ENCODE measurements at regions of chr19 and their contacts with region 1.

Region 1: GRCh38 chr19:10580979-10581631 is 6.0 kb downstream of the AP1M2 start:
- DNase-seq: peak; percentile 86
- H3K4me3 ChIP-seq: peak overlapping the region in 1 of 2 experiments; percentile 6; a peak in 1 of 4 replicates
- H3K27ac ChIP-seq: no peak overlapping the region
- H3K4me1 ChIP-seq: peaks cover 0 to 3% of the 10 kb centered on the region in 2 experiments; a peak in 1 of 4 replicates
- H3K27me3 ChIP-seq: no peaks in the 10 kb centered on the region
- CTCF ChIP-seq: peak; percentile 97
- EP300 ChIP-seq: no peak
- RAD21 ChIP-seq: peak; percentile 98

Region 2: GRCh38 chr19:10565567-10566407 is 15.3 kb before region 1 on chr19 and contains the start of gene KRI1:
- CTCF ChIA-PET with region 1: interaction called, 42 read pairs
- POLR2A ChIA-PET with region 1: no interaction called
- DNase-seq: peak; percentile 99
- H3K4me3 ChIP-seq: peak within 1 kb of the TSS; percentile 77 to 89
- H3K27ac ChIP-seq: peak within 1 kb of the TSS; percentile 64 to 77; a peak in 3 of 4 replicates
- H3K4me1 ChIP-seq: peaks cover 8 to 30% of the 10 kb centered on the region in 2 experiments; a peak in 3 of 4 replicates
- H3K27me3 ChIP-seq: no peaks in the 10 kb centered on the region
- CTCF ChIP-seq: no peak; the same call in 1 of the 2 replicates
- EP300 ChIP-seq: no peak
- RAD21 ChIP-seq: no peak
- polyA plus RNA-seq, gene KRI1: 23.3 and 26.7 TPM in 2 replicates

Region 3: DNA sequence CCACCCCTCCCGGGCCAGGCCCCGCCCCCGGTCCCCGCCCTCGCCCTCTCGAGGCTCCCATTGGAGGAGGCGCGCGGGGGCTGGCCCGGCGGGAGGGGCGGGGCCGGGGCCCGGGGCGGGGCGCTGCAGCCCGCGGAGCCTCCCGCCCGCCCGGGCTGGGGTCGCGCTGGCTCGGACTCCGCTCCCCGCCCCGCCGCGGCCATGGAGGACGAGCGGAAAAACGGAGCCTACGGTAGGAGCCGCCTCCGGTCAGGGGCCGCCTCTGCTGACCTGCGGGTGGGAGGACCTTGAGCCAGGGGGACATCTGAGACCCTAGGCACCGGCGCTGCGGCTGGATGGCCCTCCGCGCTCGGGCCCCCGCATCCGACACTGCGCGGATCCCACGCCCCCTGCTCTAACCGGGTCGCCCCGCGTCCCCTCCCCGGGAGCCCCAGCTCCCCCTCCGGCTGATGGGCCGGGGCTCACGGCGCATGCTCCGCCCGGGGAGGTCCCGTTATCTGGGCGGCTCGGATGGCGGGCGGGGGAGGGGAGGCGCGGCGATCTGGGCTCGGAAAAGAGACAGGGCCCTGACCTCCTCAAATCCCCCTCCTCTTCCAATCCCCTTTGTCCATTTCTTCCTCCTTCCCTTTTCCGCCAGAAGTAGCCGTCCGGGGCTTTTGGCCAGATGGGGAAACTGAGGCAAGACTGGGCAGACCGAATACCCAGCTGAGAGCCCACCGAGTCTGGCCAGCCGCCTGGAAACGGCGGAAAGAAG is 21.4 kb after region 1 on chr19:
- CTCF ChIA-PET with region 1: interaction called, 51 read pairs
- POLR2A ChIA-PET with region 1: no interaction called
- DNase-seq: peak; percentile 100
- H3K4me3 ChIP-seq: peak overlapping the region; percentile 69 to 95
- H3K27ac ChIP-seq: peak overlapping the region; percentile 54 to 83; a peak in 3 of 4 replicates
- H3K4me1 ChIP-seq: peaks cover 0 to 8% of the 10 kb centered on the region in 2 experiments; a peak in 1 of 4 replicates
- H3K27me3 ChIP-seq: peaks cover 15% of the 10 kb centered on the region; the same call in 1 of the 2 replicates
- CTCF ChIP-seq: no peak
- EP300 ChIP-seq: no peak
- RAD21 ChIP-seq: no peak

Region 4: GRCh38 chr19:10625003-10625776 is 44.1 kb after region 1 on chr19 and contains the start of gene SLC44A2:
- CTCF ChIA-PET with region 1: interaction called, 18 read pairs
- POLR2A ChIA-PET with region 1: no interaction called
- DNase-seq: peak; percentile 93
- H3K4me3 ChIP-seq: peak within 1 kb of the TSS; percentile 48 to 77
- H3K27ac ChIP-seq: peak within 1 kb of the TSS in 1 of 2 experiments; percentile 22; a peak in 1 of 4 replicates
- H3K4me1 ChIP-seq: peaks cover 0 to 3% of the 10 kb centered on the region in 2 experiments; a peak in 1 of 4 replicates
- H3K27me3 ChIP-seq: no peaks in the 10 kb centered on the region
- CTCF ChIP-seq: no peak
- EP300 ChIP-seq: peak in 1 of 2 experiments; percentile 30; a peak in 1 of 4 replicates
- RAD21 ChIP-seq: no peak
- polyA plus RNA-seq, gene SLC44A2: 61.4 and 66.6 TPM in 2 replicates

Region 5: GRCh38 chr19:10653715-10654492 is 72.8 kb after region 1 on chr19 and contains the start of gene ILF3:
- CTCF ChIA-PET with region 1: interaction called, 330 read pairs
- POLR2A ChIA-PET with region 1: no interaction called
- DNase-seq: peak; percentile 96
- H3K4me3 ChIP-seq: peak within 1 kb of the TSS; percentile 77 to 98
- H3K27ac ChIP-seq: peak within 1 kb of the TSS; percentile 87 to 95
- H3K4me1 ChIP-seq: peaks cover 0 to 9% of the 10 kb centered on the region in 2 experiments
- H3K27me3 ChIP-seq: no peaks in the 10 kb centered on the region
- CTCF ChIP-seq: no peak
- EP300 ChIP-seq: no peak
- RAD21 ChIP-seq: no peak
- polyA plus RNA-seq, gene ILF3: 203 and 229 TPM in 2 replicates

Region 6: DNA sequence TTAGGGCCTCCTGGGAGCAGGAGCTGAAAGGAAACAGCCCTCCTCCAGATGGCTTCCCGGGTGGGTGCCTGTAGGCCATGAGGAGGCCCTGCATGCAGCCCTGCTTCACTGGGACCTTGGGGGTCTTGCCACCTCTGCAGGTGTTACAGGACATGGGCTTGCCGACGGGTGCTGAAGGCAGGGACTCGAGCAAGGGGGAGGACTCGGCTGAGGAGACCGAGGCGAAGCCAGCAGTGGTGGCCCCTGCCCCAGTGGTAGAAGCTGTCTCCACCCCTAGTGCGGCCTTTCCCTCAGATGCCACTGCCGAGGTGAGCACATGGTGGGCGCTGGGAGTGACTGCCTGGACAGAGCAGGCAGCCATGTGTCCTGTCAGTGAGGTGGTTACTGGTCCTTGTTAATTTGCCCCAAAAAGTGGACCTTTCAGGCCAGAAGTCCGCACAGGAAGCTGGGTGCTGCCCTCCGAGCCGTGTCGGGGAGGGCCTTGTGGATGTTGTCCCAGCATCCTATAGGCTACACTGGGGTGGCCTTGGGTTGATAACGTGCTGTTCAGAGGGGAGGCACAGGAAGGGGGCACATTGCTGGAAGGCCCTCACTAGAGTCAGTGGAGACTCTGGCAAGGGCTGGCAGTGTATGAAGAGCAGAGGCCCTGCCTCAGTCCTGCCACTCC is 101.4 kb after region 1 on chr19:
- CTCF ChIA-PET with region 1: interaction called, 15 read pairs
- POLR2A ChIA-PET with region 1: no interaction called
- DNase-seq: no peak
- H3K4me3 ChIP-seq: no peak overlapping the region
- H3K27ac ChIP-seq: no peak overlapping the region; a peak in 1 of 4 replicates
- H3K4me1 ChIP-seq: no peaks in the 10 kb centered on the region; a peak in 1 of 4 replicates
- H3K27me3 ChIP-seq: no peaks in the 10 kb centered on the region
- CTCF ChIP-seq: no peak
- EP300 ChIP-seq: no peak
- RAD21 ChIP-seq: no peak

Region 7: DNA sequence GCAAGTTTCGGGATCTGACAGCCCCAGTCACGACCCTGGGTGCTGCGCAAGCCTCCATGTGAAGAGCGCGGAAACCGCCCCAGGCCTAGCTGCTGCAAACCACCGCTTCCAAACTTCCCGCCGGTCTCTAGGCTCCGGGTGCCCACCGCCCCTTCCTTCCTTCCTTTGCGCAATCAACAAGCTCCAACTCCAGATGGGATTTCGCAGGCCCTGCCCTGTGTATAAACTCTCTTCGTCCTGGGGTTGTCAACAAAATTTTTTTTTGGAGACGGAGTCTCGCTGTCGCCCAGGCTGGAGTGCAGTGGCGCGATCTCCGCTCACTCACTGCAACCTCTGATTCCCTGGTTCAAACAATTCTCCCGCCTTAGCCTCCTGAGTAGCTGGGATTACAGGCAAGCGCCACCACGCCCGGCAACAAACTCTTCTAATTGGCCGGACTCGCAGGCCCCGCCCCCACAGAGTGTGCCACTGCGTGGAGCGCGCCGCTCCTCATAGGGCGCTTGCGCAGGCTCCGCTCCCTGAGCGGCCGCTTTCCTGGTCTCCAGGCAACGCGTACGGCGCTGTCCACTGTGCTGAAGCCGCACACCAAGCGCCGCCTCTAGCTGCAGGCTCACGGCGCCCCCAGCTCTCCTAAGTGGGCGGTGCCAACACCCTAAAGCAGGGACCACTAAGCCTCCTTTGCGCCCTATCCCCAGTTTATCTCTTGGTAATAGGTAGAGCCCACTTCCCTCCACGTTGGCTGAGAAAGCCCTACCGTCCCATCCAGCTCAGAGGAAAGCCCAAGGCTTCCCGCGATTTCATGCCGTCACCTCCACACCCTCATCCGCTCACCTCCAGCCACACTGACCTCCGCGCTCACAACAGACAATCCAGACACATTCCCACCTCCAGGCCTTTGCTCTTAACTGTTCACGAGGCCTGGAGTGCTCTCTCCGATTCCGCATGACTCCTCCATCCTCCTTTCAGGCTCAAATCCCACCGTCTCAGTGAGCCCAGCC is 114.6 kb after region 1 on chr19:
- CTCF ChIA-PET with region 1: interaction called, 163 read pairs
- POLR2A ChIA-PET with region 1: interaction called, 4 read pairs
- DNase-seq: peak; percentile 95
- H3K4me3 ChIP-seq: peak overlapping the region; percentile 22 to 63
- H3K27ac ChIP-seq: no peak overlapping the region
- H3K4me1 ChIP-seq: peaks cover 0 to 10% of the 10 kb centered on the region in 2 experiments; a peak in 1 of 4 replicates
- H3K27me3 ChIP-seq: no peaks in the 10 kb centered on the region
- CTCF ChIP-seq: no peak
- EP300 ChIP-seq: no peak
- RAD21 ChIP-seq: no peak